Calu3 (cell line): ENCODE measurements at regions of chr12 and their contacts with region 1.

Region 1: GRCh38 chr12:48084066-48084465 is 21.8 kb downstream of the SENP1 start:
- DNase-seq: no peak
- H3K4me3 Mint-ChIP-seq: no peak overlapping the region
- H3K27ac Mint-ChIP-seq: no peak overlapping the region
- H3K4me1 Mint-ChIP-seq: no peaks in the 10 kb centered on the region
- H3K27me3 Mint-ChIP-seq: no peaks in the 10 kb centered on the region
- CTCF ChIP-seq: no peak

Region 2: DNA sequence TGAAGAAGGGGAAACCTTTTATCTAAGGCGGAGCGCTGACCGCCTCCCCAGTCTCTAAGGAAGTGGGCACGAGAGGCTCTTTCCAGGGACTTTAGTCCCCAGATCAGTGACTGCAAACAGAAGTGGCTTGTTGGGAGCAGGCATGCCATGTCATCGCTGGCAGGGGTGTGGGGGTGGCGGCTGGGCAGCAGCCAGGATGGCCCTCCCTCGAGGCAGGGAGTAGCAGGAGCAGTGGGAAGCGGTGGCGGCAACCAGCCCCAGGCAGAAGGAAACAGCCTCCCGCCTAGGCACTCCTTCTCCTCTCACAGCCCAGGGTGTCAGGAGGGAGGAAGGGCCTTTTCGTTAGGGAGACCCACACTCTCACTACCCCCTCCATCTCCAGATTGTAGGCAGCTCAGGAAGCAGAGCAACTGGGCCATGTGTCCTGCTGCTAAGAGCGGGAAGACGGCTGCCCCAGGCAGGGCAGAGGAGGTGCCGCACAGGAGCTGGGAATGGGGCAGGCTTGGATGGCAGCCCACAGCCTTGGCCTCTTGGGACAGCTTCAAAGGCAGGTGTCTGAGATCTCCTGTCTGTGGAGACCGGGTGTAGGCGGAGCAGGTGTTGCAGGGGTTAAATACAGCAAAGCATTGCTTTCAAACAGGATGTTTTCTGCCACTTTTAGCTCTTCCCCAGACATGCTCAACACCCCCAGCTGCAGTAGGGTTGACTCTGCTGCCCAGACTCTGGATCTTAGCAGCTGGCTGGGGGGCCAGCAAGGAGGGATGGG is 201.1 kb before region 1 on chr12:
- CTCF ChIA-PET with region 1: no interaction called
- intact Hi-C with region 1: no loop called
- DNase-seq: peak; percentile 36
- H3K4me3 Mint-ChIP-seq: no peak overlapping the region
- H3K27ac Mint-ChIP-seq: no peak overlapping the region
- H3K4me1 Mint-ChIP-seq: peaks cover 24% of the 10 kb centered on the region
- H3K27me3 Mint-ChIP-seq: no peaks in the 10 kb centered on the region
- CTCF ChIP-seq: no peak

Region 3: DNA sequence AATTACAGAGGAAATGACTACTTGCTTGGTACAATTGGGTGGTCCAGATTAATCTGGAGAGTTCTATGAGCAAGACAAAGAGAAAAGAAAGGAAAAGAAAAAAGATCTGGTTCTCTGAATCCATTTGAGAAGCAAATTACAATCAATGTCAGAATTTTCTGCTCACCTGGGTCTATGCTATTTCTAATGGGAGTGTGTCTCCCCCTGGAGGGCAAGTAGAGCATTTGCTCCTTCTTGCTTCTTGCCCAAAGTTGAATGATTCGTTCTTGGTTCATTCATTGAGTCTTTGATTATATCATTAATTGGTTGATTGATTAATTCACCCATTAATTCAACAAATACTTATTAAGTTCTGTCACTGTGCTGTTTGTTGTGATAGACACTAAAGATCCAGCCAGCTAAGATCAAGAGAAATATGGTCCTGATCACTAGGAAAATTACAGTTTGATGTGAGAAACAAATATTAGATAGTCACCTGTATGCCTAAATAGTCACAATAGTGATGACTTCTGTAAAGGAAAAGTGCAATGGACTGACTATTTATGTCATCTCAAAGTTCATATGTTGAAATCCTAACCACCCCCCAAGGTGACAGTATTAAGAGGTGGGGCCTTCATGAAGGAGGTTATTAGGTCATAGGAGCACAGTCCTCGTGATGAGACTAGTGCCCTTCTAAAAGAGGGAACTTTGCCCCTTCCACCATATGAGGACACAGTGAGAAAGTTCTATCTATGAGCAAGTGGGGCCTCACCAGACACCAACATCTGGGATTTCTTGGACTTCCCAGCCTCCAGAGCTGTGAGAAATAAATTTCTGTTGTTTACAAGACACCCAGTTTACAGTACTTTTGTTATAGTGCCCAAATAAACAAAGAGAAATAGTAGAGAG is 81.3 kb after region 1 on chr12:
- CTCF ChIA-PET with region 1: no interaction called
- intact Hi-C with region 1: loop called (anchors 1 kb)
- DNase-seq: peak; percentile 52
- H3K4me3 Mint-ChIP-seq: no peak overlapping the region
- H3K27ac Mint-ChIP-seq: no peak overlapping the region
- H3K4me1 Mint-ChIP-seq: no peaks in the 10 kb centered on the region
- H3K27me3 Mint-ChIP-seq: peaks cover 38% of the 10 kb centered on the region
- CTCF ChIP-seq: peak; percentile 43